HepG2 (cell line): ENCODE measurements at regions of chr4 and their contacts with region 1.

Region 1: DNA sequence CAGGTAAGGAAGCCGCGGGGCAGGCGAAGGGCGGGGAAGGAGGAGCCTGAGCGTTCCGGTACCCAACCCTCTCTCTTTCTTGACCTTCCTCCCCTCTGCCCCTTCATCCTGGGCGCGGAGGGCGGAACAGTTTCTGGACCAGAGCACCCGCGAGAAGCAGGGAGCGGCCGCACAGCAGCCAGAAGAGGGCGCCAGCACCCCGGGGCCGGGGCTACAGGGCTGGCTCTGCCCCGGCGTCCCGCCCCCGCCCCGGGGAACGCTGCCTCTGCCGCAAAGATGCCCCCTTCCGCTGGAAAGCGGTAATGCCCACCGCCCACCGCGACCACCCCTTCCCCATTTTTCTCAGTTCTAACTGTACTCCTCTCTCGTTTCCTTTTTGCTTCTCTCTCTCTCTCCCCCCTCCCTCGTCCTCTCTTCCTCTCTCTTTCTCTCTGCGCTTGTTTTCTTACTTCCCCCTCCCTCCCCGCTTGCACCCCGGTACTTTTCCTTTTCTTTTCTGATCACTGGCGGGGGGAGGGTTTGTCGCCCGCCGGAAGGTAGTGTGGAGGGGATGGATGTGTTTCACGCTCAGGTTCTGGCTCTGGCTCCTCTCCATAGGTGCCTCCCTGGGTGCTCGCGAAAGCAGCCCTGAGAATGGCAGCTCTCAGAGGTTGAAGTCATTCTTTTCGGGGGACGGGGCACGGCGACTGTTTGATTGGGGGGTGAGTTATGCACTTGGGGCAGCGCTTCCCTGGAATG is 13.1 kb upstream of the PRDM8 start:
- DNase-seq: peak; percentile 32
- ATAC-seq: peak; percentile 99
- H3K4me3 ChIP-seq: peak overlapping the region; percentile 45 to 75 (median 53)
- H3K27ac ChIP-seq: no peak overlapping the region
- H3K4me1 ChIP-seq: peaks cover 7% of the 10 kb centered on the region; the same call in 1 of the 2 replicates
- H3K27me3 ChIP-seq: peaks cover 4 to 59% of the 10 kb centered on the region in 2 experiments
- CTCF ChIP-seq: peak; percentile 85
- EP300 ChIP-seq: no peak
- POLR2A ChIP-seq: no peak
- RAD21 ChIP-seq: peak; percentile 75

Region 2: GRCh38 chr4:79364061-79364460 is 820.2 kb before region 1 on chr4:
- CTCF ChIA-PET with region 1: no interaction called
- POLR2A ChIA-PET with region 1: no interaction called
- in situ Hi-C with region 1: no loop called
- intact Hi-C with region 1: no loop called
- DNase-seq: no peak
- ATAC-seq: no peak
- H3K4me3 ChIP-seq: no peak overlapping the region
- H3K27ac ChIP-seq: no peak overlapping the region
- H3K4me1 ChIP-seq: no peaks in the 10 kb centered on the region
- H3K27me3 ChIP-seq: no peaks in the 10 kb centered on the region
- CTCF ChIP-seq: no peak
- EP300 ChIP-seq: no peak
- POLR2A ChIP-seq: no peak
- RAD21 ChIP-seq: no peak

Region 3: DNA sequence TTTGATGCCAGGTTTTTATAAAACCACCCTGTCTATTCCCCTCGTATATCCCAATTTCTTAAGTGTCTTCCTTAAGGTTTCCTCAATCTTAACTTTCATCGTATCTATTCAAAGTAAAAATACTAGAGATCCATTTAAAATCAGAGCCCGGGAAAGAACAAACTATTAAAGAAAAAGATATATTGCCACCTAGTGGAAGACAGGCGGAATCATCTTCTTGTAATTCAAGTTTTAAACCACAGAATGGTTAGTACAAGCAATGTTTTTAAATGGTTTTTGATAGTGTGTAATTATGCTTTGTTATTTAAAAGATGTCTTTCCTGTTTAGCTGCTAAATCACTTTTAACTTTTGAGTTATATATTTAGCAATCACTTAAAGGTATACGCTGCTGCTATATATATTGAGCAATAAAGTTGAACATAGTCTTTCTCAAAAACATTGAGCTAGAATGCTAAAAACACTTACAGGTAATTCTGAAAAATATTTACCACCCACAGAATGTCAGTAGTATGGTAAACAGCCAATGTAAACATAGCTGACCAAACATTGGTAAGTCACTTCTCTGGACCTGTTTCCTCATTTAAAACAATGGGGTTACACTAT is 31.3 kb after region 1 on chr4:
- CTCF ChIA-PET with region 1: interaction called, 5 read pairs
- POLR2A ChIA-PET with region 1: no interaction called
- in situ Hi-C with region 1: no loop called
- intact Hi-C with region 1: loop called (anchors 2 kb)
- DNase-seq: peak; percentile 1
- ATAC-seq: no peak
- H3K4me3 ChIP-seq: no peak overlapping the region
- H3K27ac ChIP-seq: no peak overlapping the region
- H3K4me1 ChIP-seq: no peaks in the 10 kb centered on the region
- H3K27me3 ChIP-seq: no peaks in the 10 kb centered on the region
- CTCF ChIP-seq: peak; percentile 54
- EP300 ChIP-seq: no peak
- POLR2A ChIP-seq: no peak
- RAD21 ChIP-seq: no peak